ENCODE measurements at regions of chr7 and their contacts with region 1.

Region 1: GRCh38 chr7:27196287-27196767 is 3.6 kb downstream of the HOXA13 start:
- DNase-seq: peak; percentile 80 to 95
- H3K4me3 ChIP-seq: peak overlapping the region; percentile 65
- H3K4me1 ChIP-seq: peaks cover 9% of the 10 kb centered on the region; the same call in 1 of the 2 replicates
- H3K27me3 ChIP-seq: no peaks in the 10 kb centered on the region

Region 2: DNA sequence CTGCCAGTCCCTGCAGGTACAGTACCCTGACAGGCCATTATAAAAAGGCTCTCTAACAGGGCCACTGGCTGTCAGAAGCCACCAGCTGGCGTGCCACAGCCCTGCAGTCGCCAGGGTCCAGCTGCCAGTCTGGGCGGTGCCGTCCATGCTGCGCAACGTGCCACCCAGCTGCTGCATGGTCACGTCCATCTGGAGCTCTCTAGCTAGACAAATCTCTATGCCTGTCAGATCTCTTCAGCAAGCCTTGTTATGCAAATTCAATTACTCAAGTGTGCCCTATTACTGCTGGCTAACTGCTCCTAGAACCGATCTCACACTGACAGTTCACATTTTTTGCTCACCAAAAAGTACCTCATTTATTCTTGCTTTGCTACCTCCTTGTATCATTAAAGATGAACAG is 390.5 kb after region 1 on chr7:
- in situ Hi-C with region 1: loop called (anchors 10 kb)
- DNase-seq: peak; percentile 52 to 79
- H3K4me3 ChIP-seq: no peak overlapping the region
- H3K4me1 ChIP-seq: peaks cover 32% of the 10 kb centered on the region
- H3K27me3 ChIP-seq: no peaks in the 10 kb centered on the region

Region 3: DNA sequence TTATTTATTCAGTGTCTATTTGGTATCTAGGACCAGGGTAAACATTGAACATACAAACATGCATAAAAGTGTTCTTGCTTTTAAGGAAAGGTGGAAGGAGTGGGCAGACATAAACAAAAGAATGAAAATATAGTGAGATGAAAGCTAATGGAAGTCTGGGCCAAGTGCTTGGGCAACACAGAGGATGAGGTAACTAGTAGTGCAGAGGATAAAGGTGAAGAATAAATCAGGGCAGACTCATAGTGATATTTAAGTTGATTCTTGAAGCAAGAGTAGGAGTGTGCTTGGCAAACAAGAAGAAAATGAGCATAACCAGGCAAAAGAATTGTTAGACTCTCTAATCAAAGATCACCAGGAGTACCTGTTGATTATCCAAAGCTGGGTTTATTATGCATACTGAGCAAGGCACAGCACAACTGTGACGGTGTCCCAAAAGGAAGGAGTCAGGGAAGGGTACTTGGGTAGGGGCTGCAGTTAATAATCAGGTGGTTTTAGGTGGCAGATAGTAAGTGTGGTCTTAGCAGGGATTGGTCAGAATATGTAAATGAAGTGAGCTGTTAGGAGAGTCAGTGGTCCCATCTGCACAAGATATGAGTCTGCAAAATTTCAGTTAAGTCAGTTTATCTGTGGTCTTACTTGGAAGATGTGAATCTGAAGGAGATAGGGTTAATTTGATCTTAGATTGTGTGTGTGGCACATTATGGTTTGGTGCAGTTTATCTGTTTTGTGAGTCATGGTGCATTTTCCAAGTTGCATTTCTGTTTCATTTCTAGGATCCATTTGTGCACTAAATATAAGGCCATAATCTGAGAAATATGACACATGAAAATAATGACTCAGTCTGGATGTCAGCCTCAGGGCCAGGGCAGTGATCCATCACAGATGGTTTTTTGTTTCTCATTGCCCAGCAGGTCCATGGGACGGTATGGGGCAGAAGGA is 513.1 kb after region 1 on chr7:
- in situ Hi-C with region 1: no loop called
- DNase-seq: no peak
- H3K4me3 ChIP-seq: no peak overlapping the region
- H3K4me1 ChIP-seq: no peaks in the 10 kb centered on the region
- H3K27me3 ChIP-seq: no peaks in the 10 kb centered on the region

Region 4: GRCh38 chr7:27739909-27740448 is 543.7 kb after region 1 on chr7 and contains the start of gene TAX1BP1:
- in situ Hi-C with region 1: loop called (anchors 10 kb)
- DNase-seq: peak; percentile 92 to 97
- H3K4me3 ChIP-seq: peak within 1 kb of the TSS; percentile 88
- H3K4me1 ChIP-seq: peaks cover 30% of the 10 kb centered on the region
- H3K27me3 ChIP-seq: no peaks in the 10 kb centered on the region

Region 5: DNA sequence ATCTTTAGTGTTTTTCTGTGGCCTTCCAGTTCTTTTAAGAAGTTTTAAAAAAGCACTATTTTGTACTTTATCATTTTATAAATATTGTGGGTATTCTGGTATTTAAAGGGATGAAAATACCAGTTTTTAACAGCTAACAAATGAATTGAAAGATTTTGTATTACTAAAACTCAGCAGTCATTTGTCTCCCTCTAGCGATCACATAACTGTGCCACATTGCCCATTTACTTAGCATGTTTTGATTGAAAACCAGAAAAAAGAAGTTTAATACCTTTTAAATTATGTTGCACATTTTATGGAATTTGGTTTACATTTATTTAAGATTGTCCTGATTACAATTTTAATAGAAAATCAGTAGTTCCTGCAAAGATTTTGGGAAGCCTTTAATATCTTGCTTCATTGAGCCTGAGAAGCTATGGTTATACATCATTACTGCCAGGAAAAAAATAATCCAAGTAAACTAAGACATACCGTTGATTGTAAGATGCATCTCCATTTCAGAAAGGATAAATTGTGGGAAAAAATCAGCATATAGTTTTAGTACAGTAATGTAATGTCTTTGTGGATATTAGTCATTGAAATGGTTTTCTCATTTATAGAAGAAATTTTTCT is 578.5 kb after region 1 on chr7:
- in situ Hi-C with region 1: loop called (anchors 5 kb)
- DNase-seq: peak; percentile 18 to 51
- H3K4me3 ChIP-seq: no peak overlapping the region
- H3K4me1 ChIP-seq: peaks cover 4% of the 10 kb centered on the region; the same call in 1 of the 2 replicates
- H3K27me3 ChIP-seq: no peaks in the 10 kb centered on the region

Region 6: DNA sequence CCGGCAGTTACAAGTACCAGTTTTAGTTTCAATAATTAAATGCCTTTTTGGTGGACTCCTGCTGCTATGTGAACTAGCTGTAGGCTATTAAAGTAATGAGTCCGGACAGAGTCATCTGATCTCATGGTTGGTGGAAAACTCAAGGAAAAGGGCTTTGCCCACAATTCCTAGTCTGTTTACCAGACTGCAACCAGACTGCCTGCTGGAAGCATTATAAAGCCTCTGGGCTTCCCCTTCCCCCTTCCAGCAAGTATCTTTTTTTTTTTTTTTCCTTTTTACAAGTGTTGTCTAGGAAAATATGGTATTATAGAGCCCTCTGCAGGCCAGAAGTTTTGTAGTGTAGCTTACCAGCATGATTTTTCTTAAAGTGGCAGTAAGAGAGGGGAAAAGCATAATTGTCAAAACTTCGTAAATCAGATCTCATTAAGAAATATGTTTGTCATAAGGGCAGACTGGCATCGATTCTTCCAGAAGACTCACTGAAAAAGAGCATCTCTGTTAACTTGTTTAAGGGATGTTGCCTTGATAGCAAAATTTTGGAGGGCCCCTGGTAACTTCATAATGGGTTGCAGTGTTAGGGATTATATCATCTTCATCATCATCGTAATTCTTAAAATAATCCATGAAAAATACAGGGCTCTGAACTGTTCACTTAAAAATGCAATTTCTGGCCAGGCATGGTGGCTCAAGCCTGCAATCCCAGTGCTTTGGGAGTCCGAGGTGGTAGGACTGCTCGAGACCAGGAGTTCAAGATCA is 724.9 kb after region 1 on chr7:
- in situ Hi-C with region 1: loop called (anchors 5 kb)
- DNase-seq: peak; percentile 75 to 88
- H3K4me3 ChIP-seq: no peak overlapping the region
- H3K4me1 ChIP-seq: peaks cover 11% of the 10 kb centered on the region
- H3K27me3 ChIP-seq: no peaks in the 10 kb centered on the region

Region 7: GRCh38 chr7:28020302-28020940 is 824.1 kb after region 1 on chr7:
- in situ Hi-C with region 1: loop called (anchors 5 kb)
- DNase-seq: peak; percentile 77 to 85
- H3K4me3 ChIP-seq: no peak overlapping the region
- H3K4me1 ChIP-seq: peaks cover 3% of the 10 kb centered on the region; the same call in 1 of the 2 replicates
- H3K27me3 ChIP-seq: no peaks in the 10 kb centered on the region

Measured in HAP-1 (cell line).